Posterior cingulate gyrus (tissue), 11 donors: ENCODE measurements at regions of chr9 and their contacts with region 1.

Region 1: GRCh38 chr9:95147452-95148207 is 169.9 kb downstream of the FANCC start:
- DNase-seq: no peak

Region 2: DNA sequence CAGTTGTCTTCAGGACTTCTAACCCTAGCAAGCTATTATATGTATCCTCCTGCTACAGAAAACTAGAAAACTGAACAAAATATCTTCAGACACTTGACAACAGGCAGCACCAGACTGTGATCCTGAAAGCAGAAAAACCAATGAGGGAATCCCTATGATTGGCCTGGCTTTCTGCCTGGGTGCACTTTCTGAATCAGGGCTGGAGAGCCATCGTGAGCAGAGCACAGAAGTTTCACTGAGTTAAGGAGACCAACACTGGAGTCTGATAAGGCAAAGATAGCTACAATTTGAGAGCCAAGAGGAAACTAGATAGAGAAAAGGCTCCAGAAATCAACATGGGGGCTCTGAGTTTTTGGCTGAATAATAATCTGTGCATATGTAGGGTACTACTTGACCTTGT is 63.4 kb after region 1 on chr9:
- intact Hi-C with region 1: loop called (anchors 2 kb)
- DNase-seq: no peak